CD4-positive, alpha-beta memory T cell (primary cell): ENCODE measurements at regions of chr5 and their contacts with region 1.

Region 1: DNA sequence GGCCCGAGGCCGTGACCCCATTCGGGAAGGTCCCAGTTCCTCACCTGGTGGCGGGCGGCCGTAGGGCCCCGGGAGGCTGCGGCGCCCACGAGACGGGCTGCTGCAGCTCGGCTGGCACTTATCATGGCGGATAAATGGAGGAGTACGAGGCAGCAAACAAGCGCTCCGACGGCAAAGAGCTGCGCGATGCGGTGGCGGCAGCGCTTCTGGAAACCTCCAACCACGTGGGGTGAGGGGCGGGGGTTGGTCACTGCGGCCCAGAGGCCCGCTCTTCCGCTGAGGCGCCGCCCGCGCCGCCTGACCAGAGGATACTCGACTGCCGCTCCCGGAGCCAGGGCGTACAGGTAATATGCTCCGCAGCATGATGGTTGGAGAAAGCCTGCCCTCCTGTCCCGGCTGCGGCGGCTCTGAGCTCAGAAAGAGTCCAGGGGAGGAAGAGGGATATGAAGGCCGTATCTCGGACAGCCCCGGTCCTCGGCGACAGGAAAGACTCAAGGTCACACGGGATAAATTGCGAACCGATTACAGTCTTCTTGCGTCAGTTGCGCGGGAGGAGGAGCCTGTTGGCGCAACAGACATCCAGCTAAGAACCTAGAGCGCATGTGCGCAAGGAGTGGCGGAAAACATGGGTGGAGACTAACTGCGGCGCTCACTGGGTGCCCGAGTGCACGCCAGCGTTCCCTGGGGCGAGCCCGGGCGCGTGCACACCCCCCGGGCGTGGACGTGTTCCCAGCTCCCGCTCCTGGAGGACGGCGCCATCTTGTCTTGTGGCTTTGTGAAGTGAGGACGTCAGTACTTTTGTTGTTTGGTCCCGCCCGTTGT is at the start of gene HSPA9:
- DNase-seq: peak; percentile 98 to 99 (median 98)
- H3K4me3 ChIP-seq: peak within 1 kb of the TSS; percentile 88 to 99
- H3K4me3 Mint-ChIP-seq: peak within 1 kb of the TSS; percentile 92 to 99 (median 98)
- H3K27ac ChIP-seq: peak within 1 kb of the TSS; percentile 99
- H3K27ac Mint-ChIP-seq: peak within 1 kb of the TSS; percentile 100
- H3K4me1 ChIP-seq: peaks cover 28% of the 10 kb centered on the region
- H3K4me1 Mint-ChIP-seq: peaks cover 18 to 51% (median 35%) of the 10 kb centered on the region in 4 donors
- H3K27me3 ChIP-seq: no peaks in the 10 kb centered on the region
- H3K27me3 Mint-ChIP-seq: no peaks in the 10 kb centered on the region
- total RNA-seq, gene HSPA9: 144 to 171 TPM

Region 2: GRCh38 chr5:138035605-138036537 is 539.5 kb before region 1 on chr5:
- CTCF ChIA-PET with region 1: no interaction called
- POLR2A ChIA-PET with region 1: no interaction called
- intact Hi-C with region 1: loop called (anchors 10 kb)
- DNase-seq: peak; percentile 75 to 81 (median 76)
- H3K4me3 ChIP-seq: no peak overlapping the region
- H3K4me3 Mint-ChIP-seq: peak overlapping the region in 7 of 8 donors; percentile 1 to 90 (median 56)
- H3K27ac ChIP-seq: no peak overlapping the region
- H3K27ac Mint-ChIP-seq: peak overlapping the region; percentile 14 to 77 (median 72)
- H3K4me1 ChIP-seq: peaks cover 20% of the 10 kb centered on the region
- H3K4me1 Mint-ChIP-seq: peaks cover 18 to 38% (median 25%) of the 10 kb centered on the region in 4 donors
- H3K27me3 ChIP-seq: no peaks in the 10 kb centered on the region
- H3K27me3 Mint-ChIP-seq: no peaks in the 10 kb centered on the region

Region 3: DNA sequence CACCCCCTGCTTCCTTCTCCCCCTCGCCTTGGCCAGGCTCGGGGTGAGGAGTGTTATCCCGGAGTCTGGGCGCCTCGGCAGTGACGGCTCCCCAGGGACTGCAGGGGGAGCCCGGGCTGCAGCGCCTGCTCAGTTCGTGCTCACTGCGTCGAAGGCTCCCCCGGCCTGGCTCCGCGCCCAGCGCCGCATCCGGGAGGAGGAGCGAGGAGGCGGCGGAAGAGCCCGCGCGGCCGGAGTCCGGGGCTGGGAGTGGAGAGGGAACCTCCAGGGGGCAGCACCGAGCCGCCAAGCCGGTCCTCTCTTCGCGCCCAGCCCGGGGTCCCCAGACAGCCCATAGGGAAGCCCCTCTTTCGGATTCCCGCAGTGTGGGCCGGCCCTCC is 111.4 kb before region 1 on chr5:
- CTCF ChIA-PET with region 1: interaction called, 5 read pairs
- POLR2A ChIA-PET with region 1: interaction called, 22 read pairs
- intact Hi-C with region 1: loop called (anchors 1 kb)
- DNase-seq: peak; percentile 91 to 95 (median 94)
- H3K4me3 ChIP-seq: peak overlapping the region; percentile 79 to 85
- H3K4me3 Mint-ChIP-seq: peak overlapping the region; percentile 85 to 97 (median 90)
- H3K27ac ChIP-seq: peak overlapping the region; percentile 90
- H3K27ac Mint-ChIP-seq: peak overlapping the region; percentile 89 to 96 (median 93)
- H3K4me1 ChIP-seq: peaks cover 46% of the 10 kb centered on the region
- H3K4me1 Mint-ChIP-seq: peaks cover 27 to 65% (median 39%) of the 10 kb centered on the region in 4 donors
- H3K27me3 ChIP-seq: no peaks in the 10 kb centered on the region
- H3K27me3 Mint-ChIP-seq: no peaks in the 10 kb centered on the region

Region 4: GRCh38 chr5:138552700-138553099 is 22.7 kb before region 1 on chr5:
- CTCF ChIA-PET with region 1: interaction called, 8 read pairs
- POLR2A ChIA-PET with region 1: interaction called, 20 read pairs
- intact Hi-C with region 1: no loop called
- DNase-seq: no peak
- H3K4me3 ChIP-seq: no peak overlapping the region
- H3K4me3 Mint-ChIP-seq: no peak overlapping the region
- H3K27ac ChIP-seq: no peak overlapping the region
- H3K27ac Mint-ChIP-seq: peak overlapping the region in 3 of 7 donors; percentile 6 to 69 (median 29)
- H3K4me1 ChIP-seq: peaks cover 13% of the 10 kb centered on the region
- H3K4me1 Mint-ChIP-seq: peaks cover 19 to 30% (median 21%) of the 10 kb centered on the region in 4 donors
- H3K27me3 ChIP-seq: no peaks in the 10 kb centered on the region
- H3K27me3 Mint-ChIP-seq: no peaks in the 10 kb centered on the region

Region 5: GRCh38 chr5:139197710-139198669 is 622.6 kb after region 1 on chr5 and contains the start of gene SIL1:
- CTCF ChIA-PET with region 1: no interaction called
- POLR2A ChIA-PET with region 1: interaction called, 3 read pairs
- intact Hi-C with region 1: loop called (anchors 1 kb)
- DNase-seq: peak; percentile 90 to 93 (median 91)
- H3K4me3 ChIP-seq: peak within 1 kb of the TSS; percentile 59 to 69
- H3K4me3 Mint-ChIP-seq: peak within 1 kb of the TSS; percentile 87 to 95 (median 89)
- H3K27ac ChIP-seq: peak within 1 kb of the TSS; percentile 86
- H3K27ac Mint-ChIP-seq: peak within 1 kb of the TSS; percentile 84 to 98 (median 94)
- H3K4me1 ChIP-seq: peaks cover 13% of the 10 kb centered on the region
- H3K4me1 Mint-ChIP-seq: peaks cover 13 to 29% (median 19%) of the 10 kb centered on the region in 4 donors
- H3K27me3 ChIP-seq: no peaks in the 10 kb centered on the region
- H3K27me3 Mint-ChIP-seq: no peaks in the 10 kb centered on the region
- total RNA-seq, gene SIL1: 16.4 to 16.7 TPM

Region 6: GRCh38 chr5:139403787-139404483 is 828.5 kb after region 1 on chr5 and contains the start of gene SPATA24:
- CTCF ChIA-PET with region 1: no interaction called
- POLR2A ChIA-PET with region 1: no interaction called
- intact Hi-C with region 1: loop called (anchors 5 kb)
- DNase-seq: peak; percentile 97 to 98 (median 98)
- H3K4me3 ChIP-seq: peak within 1 kb of the TSS; percentile 71 to 90
- H3K4me3 Mint-ChIP-seq: peak within 1 kb of the TSS; percentile 91 to 99 (median 94)
- H3K27ac ChIP-seq: peak within 1 kb of the TSS; percentile 85
- H3K27ac Mint-ChIP-seq: peak within 1 kb of the TSS; percentile 91 to 100 (median 99)
- H3K4me1 ChIP-seq: peaks cover 20% of the 10 kb centered on the region
- H3K4me1 Mint-ChIP-seq: peaks cover 16 to 31% (median 22%) of the 10 kb centered on the region in 4 donors
- H3K27me3 ChIP-seq: no peaks in the 10 kb centered on the region
- H3K27me3 Mint-ChIP-seq: no peaks in the 10 kb centered on the region
- total RNA-seq, gene SPATA24: 5.6 to 7.5 TPM